MCF 10A (cell line): ENCODE measurements at regions of chr14 and their contacts with region 1.

Region 1: GRCh38 chr14:35416108-35416750 is 11.7 kb upstream of the NFKBIA start:
- DNase-seq: no peak
- H3K4me3 Mint-ChIP-seq: no peak overlapping the region
- H3K27ac Mint-ChIP-seq: peak overlapping the region; percentile 9
- H3K4me1 Mint-ChIP-seq: peaks cover 21% of the 10 kb centered on the region
- H3K27me3 Mint-ChIP-seq: no peaks in the 10 kb centered on the region
- CTCF ChIP-seq: no peak

Region 2: DNA sequence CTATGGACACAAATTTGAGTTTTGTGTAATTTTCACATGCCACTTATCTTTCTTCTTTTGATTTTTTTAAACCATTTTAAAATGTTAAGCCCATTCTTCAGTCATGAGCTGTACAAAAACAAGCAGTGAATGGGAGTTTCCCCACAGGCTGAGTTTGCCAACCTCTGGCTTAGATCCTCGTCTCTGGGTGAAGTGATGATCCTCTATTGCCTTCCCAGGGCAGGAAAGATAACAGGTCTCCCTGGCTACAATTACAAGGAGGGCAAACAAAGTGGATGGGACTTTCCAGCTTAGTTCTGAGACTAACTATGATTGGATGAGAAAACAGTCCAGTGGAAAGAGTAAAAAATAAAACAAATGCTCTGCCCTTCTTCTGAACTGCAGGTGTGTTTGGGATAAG is 1157.9 kb before region 1 on chr14:
- CTCF ChIA-PET with region 1: no interaction called
- POLR2A ChIA-PET with region 1: no interaction called
- intact Hi-C with region 1: no loop called
- DNase-seq: peak; percentile 15
- H3K4me3 Mint-ChIP-seq: no peak overlapping the region
- H3K27ac Mint-ChIP-seq: no peak overlapping the region
- H3K4me1 Mint-ChIP-seq: peaks cover 6% of the 10 kb centered on the region
- H3K27me3 Mint-ChIP-seq: no peaks in the 10 kb centered on the region
- CTCF ChIP-seq: no peak

Region 3: DNA sequence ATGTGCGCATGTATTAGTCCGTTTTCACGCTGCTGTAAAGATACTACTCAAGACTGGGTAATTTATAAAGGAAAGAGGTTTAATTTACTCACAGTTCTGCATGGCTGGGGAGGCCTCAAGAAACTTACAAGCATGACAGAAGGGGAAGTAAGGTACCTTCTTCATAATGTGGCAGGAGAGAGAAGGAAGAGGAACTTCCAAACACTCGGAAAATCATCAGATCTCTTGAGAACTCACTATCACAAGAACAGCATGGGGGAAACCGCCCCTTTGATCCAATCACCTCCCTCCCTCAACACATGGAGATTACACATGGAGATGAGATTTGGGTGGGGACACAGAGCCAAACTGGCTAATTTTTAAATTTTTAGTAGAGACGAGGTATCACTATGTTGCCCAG is 744.5 kb before region 1 on chr14:
- CTCF ChIA-PET with region 1: interaction called, 7 read pairs
- POLR2A ChIA-PET with region 1: no interaction called
- intact Hi-C with region 1: loop called (anchors 2 kb)
- DNase-seq: no peak
- H3K4me3 Mint-ChIP-seq: no peak overlapping the region
- H3K27ac Mint-ChIP-seq: no peak overlapping the region
- H3K4me1 Mint-ChIP-seq: no peaks in the 10 kb centered on the region
- H3K27me3 Mint-ChIP-seq: no peaks in the 10 kb centered on the region
- CTCF ChIP-seq: no peak

Region 4: GRCh38 chr14:34982417-34983147 is 433.6 kb before region 1 on chr14 and contains the start of gene SRP54:
- CTCF ChIA-PET with region 1: interaction called, 13 read pairs
- POLR2A ChIA-PET with region 1: no interaction called
- intact Hi-C with region 1: loop called (anchors 1 kb)
- DNase-seq: peak; percentile 98
- H3K4me3 Mint-ChIP-seq: no peak within 1 kb of the TSS
- H3K27ac Mint-ChIP-seq: no peak within 1 kb of the TSS
- H3K4me1 Mint-ChIP-seq: peaks cover 5% of the 10 kb centered on the region
- H3K27me3 Mint-ChIP-seq: no peaks in the 10 kb centered on the region
- CTCF ChIP-seq: no peak
- total RNA-seq, gene SRP54: 77.4 and 108 TPM in 2 replicates

Region 5: DNA sequence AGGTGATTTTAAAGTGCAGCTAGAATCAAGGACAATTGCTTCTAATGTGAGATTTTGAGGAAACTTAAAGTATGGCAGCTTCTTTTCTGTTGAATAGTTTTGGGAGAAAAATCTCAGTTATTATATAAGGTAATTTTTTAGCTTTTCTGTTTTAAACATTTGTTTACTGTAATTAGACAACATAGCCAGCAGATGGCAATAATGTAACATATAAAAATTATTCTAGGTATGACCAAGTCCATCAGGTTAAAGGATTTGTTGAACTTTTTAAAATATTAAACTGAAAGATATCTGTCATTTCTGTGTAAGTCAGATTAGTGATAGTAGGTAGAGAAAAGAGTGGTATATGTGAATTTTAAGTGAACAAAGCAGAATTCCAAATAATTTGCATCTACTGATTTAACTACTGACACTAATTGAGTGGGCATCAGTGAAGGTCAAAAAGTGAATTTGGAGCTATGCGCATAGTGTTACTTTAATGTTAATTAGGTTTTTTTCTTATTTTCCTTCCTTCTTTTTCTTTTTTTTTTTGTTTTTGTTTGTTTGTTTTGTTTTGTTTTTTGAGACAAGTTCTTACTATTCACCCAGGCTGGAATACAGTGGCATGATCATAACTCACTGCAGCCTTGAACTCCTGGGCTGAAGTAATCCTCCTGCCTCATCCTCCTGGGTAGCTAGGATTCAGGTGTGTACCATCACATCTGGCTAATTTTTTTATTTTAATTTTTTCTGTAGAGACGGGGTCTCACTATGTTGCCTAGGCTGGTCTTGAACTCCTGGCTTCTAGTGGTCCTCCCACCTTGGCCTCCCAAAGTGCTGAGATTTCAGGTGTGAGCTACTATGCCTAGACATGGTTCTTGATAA is 275.3 kb before region 1 on chr14:
- CTCF ChIA-PET with region 1: interaction called, 92 read pairs
- POLR2A ChIA-PET with region 1: interaction called, 3 read pairs
- intact Hi-C with region 1: loop called (anchors 1 kb)
- DNase-seq: no peak
- H3K4me3 Mint-ChIP-seq: no peak overlapping the region
- H3K27ac Mint-ChIP-seq: no peak overlapping the region
- H3K4me1 Mint-ChIP-seq: peaks cover 4% of the 10 kb centered on the region
- H3K27me3 Mint-ChIP-seq: no peaks in the 10 kb centered on the region
- CTCF ChIP-seq: peak; percentile 19

Region 6: DNA sequence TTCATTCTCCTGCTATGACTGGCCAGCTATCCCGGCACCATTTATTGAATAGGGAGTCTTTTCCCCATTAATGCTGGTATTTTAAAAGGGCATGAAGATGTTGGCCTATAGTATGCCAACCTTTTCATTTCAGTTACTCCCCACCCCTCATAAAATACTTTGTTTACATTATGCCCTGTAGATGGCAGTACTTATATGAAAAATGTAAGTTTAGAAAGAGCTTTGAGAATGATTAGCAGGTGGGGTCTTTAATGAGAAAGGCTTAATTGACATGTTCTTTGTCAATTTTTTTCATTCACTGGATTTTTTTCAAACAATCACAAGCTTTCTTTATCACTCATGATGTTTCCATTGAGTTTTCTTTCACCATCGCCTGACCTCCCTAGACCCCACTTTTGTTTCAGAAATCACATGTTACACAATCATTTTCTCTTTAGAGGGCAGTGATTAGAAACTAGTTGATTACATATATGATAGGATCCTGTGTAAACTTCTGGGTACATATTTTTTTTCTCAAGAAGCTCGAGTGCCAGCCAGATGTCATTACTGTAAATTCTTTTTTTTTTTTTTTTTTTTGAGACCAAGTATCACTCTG is 186.6 kb before region 1 on chr14:
- CTCF ChIA-PET with region 1: interaction called, 35 read pairs
- POLR2A ChIA-PET with region 1: interaction called, 4 read pairs
- intact Hi-C with region 1: no loop called
- DNase-seq: peak; percentile 24
- H3K4me3 Mint-ChIP-seq: no peak overlapping the region
- H3K27ac Mint-ChIP-seq: peak overlapping the region; percentile 35
- H3K4me1 Mint-ChIP-seq: peaks cover 23% of the 10 kb centered on the region
- H3K27me3 Mint-ChIP-seq: no peaks in the 10 kb centered on the region
- CTCF ChIP-seq: peak; percentile 34

Region 7: DNA sequence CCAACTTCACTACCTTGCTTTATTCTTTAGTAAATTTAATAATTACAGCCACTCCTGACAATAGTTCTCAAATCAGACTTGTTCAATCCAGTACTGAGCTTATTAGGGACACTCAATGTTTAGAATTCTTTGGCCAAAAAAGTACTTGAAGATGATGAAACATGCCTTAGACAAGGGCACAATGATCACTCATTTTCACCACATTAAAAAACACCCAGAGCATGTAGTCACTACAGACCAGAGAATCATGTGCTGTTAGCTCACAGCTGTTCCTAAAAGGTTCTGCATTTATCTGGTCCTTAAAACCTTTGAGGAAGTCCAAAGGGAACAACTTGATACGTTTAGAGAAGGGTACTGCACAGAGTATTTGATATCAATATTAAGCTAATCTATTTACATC is 216.4 kb after region 1 on chr14:
- CTCF ChIA-PET with region 1: no interaction called
- POLR2A ChIA-PET with region 1: no interaction called
- intact Hi-C with region 1: no loop called
- DNase-seq: no peak
- H3K4me3 Mint-ChIP-seq: no peak overlapping the region
- H3K27ac Mint-ChIP-seq: no peak overlapping the region
- H3K4me1 Mint-ChIP-seq: peaks cover 4% of the 10 kb centered on the region
- H3K27me3 Mint-ChIP-seq: no peaks in the 10 kb centered on the region
- CTCF ChIP-seq: no peak